ENCODE measurements at regions of chr6 and their contacts with region 1.

Region 1: DNA sequence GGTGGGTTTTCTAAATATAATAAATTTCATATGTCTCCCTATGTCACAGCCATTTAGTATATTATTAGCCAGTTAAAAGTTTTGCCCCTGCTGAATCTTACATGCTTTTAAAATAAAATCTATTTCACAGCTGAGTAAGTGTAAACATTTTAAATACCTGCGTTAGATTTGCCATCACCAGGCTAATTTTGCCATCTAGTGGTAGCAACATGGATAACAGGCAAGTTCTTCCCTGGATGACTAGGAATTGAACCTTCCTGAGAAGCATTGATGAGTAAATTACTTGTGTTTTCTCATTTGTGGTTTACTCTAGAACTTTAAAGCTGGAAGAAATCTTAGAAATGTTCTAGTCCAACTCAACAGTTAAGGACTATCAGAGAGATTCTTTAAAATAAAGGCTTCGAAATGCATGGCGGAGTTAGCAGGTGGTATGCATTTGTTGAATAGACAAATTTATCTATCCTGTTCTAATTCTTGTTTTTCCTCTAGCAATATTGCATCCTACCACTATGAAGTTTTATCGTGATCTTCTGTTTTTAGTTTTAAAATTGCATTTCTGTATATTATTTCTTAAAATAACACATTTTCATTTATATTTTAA is 2.6 kb downstream of the PRSS35 start:
- DNase-seq: peak in 1 of 2 donors; percentile 16
- ATAC-seq: no peak
- H3K4me3 ChIP-seq: no peak overlapping the region
- H3K27ac ChIP-seq: no peak overlapping the region
- H3K4me1 ChIP-seq: peaks cover 0 to 12% (median 6%) of the 10 kb centered on the region in 9 donors
- H3K27me3 ChIP-seq: peaks cover 0 to 28% (median 0%) of the 10 kb centered on the region in 7 donors
- CTCF ChIP-seq: peak; percentile 53 to 84 (median 80)

Region 2: GRCh38 chr6:83221889-83222479 is 293.0 kb before region 1 on chr6:
- intact Hi-C with region 1: loop called (anchors 1 to 5 kb)
- DNase-seq: no peak
- ATAC-seq: no peak
- H3K4me3 ChIP-seq: no peak overlapping the region
- H3K27ac ChIP-seq: no peak overlapping the region
- H3K4me1 ChIP-seq: no peaks in the 10 kb centered on the region
- H3K27me3 ChIP-seq: no peaks in the 10 kb centered on the region
- CTCF ChIP-seq: peak in 8 of 9 donors; percentile 23 to 75 (median 56)

Region 3: DNA sequence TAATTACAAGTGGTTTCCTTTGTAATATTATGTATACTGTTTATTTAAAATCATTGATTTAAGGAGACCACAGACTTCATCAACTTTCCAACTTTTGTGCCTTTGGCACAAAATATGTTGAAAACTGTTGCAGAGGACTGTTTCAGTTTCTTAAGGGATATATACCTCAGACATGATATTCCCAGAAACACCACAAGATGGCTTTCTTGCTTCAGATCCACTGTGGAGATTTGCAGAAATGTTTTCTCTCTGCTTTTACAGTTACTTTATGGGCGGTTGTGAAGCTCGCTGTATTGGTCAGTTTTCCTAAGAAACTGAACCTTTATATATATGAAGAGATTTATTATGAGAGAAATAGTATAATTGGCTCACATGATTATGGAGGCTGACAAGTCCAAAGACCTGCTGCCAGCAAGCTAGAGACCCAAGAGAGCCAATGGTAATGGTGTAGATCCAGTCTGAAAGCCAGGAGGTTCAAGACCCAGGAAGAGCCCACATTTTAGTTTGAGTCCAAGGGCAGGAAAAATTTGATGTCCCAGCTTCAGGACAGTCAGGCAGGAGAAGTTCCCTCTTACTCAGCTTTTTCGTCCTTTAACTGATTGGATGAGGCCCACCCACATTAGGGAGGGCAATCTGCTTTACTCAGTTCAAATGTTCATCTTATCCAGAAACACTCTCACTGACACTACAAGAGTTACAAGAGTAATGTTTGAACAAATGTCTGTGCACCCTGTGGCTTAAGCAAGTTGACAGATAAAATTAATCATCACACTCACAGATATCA is 96.9 kb before region 1 on chr6:
- intact Hi-C with region 1: loop called (anchors 2 to 10 kb)
- DNase-seq: no peak
- ATAC-seq: peak in 3 of 8 donors; percentile 41 to 62 (median 55)
- H3K4me3 ChIP-seq: no peak overlapping the region
- H3K27ac ChIP-seq: no peak overlapping the region
- H3K4me1 ChIP-seq: no peaks in the 10 kb centered on the region
- H3K27me3 ChIP-seq: no peaks in the 10 kb centered on the region
- CTCF ChIP-seq: peak in 8 of 9 donors; percentile 14 to 63 (median 54)

Region 4: DNA sequence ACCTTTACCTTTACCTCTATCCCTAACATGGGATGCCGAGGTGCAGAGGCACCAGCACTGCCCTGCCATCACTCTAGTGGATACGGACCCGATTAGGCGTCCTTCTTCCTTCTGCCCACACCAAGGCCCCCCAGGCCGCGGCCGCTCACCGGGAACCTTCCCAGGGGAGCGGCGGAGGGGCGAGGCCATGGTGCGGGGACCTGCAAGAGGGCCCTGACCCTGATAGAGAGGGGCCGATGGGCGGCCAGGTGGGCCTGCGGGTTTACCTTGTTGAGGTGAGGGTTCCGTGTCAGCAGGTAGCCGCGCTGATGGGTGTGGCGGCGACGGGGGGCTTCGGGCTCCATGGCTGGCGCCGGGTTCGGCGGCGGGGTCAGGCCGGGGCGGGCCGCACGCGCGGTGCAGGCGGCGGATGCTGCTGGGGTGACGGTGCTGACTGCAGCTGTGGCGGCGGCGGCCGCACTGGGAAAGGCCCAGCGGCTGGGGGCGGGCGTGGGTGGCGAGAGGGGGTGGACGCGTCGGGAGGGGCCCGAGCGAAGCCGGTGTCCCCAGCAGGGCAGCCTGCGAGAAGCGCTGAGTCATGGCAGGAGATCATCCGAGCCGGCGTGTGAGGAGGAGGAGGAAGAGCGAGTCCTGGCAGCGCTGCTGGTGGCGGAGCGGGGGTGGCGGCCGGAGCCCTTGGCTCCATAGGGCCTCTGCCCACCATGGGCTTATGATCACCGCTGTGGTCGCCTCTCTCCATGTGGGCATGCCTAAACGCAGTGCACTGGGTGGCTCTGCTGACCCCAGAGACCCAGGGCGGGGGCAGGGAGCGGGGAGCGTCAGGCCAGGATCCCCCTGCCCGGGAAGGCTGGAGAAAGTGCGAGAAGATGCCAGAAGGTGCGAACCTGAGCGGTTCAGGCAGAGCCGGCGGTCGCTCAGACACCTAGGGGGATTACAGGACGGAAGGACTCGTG is 84.1 kb before region 1 on chr6 and contains the start of gene ME1:
- intact Hi-C with region 1: loop called in 1 of 10 experiments (anchors 10 kb)
- DNase-seq: peak; percentile 68 to 80
- ATAC-seq: peak; percentile 92 to 99 (median 93)
- H3K4me3 ChIP-seq: peak within 1 kb of the TSS; percentile 56 to 87 (median 72)
- H3K27ac ChIP-seq: peak within 1 kb of the TSS in 9 of 10 donors; percentile 54 to 87 (median 70)
- H3K4me1 ChIP-seq: peaks cover 0 to 29% (median 4%) of the 10 kb centered on the region in 9 donors
- H3K27me3 ChIP-seq: no peaks in the 10 kb centered on the region
- CTCF ChIP-seq: peak in 1 of 9 donors; percentile 30
- total RNA-seq, gene ME1: 13.2 to 26.6 (median 18.0) TPM